Activated CD4-positive, alpha-beta memory T cell treated with anti-CD3 and anti-CD28 coated beads for 36 hours (primary cell): ENCODE measurements at regions of chr1 and their contacts with region 1.

Region 1: GRCh38 chr1:84753516-84754385 is 63.5 kb upstream of the SSX2IP start:
- DNase-seq: peak; percentile 86
- H3K4me3 Mint-ChIP-seq: no peak overlapping the region
- H3K27ac Mint-ChIP-seq: no peak overlapping the region
- H3K4me1 Mint-ChIP-seq: peaks cover 14% of the 10 kb centered on the region
- H3K27me3 Mint-ChIP-seq: peaks cover 27% of the 10 kb centered on the region

Region 2: DNA sequence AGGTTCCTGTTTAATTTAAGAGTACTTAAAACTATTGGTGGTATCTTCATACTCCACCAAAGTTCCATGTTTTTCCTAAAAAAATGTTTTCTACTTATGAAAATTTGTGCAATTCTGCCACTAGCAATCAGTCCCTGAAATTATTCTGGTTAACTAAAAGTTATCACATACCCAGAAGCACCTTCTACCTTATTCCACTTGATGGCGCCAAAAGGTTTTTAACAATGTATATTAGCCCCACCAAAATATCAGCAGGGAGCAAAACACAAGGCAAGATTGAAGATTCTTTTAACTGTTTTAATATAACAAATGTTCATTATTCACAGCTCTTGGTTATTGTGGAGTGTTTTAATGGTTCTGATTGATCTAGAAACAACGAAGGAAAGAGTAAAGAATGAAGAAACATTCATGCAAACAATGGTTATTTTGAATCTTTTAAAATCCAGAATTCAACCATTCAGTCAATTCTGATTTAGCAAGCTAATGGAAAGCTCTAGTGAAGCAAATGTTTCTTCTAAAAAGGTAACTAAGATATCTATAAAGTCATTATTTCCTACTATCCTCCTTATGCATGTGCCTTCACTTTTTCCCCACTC is 822.0 kb before region 1 on chr1:
- CTCF ChIA-PET with region 1: interaction called, 5 read pairs
- POLR2A ChIA-PET with region 1: no interaction called
- intact Hi-C with region 1: loop called (anchors 5 kb)
- DNase-seq: no peak
- H3K4me3 Mint-ChIP-seq: no peak overlapping the region
- H3K27ac Mint-ChIP-seq: no peak overlapping the region
- H3K4me1 Mint-ChIP-seq: no peaks in the 10 kb centered on the region
- H3K27me3 Mint-ChIP-seq: peaks cover 6% of the 10 kb centered on the region

Region 3: GRCh38 chr1:84442256-84442655 is 311.5 kb before region 1 on chr1:
- CTCF ChIA-PET with region 1: interaction called, 35 read pairs
- POLR2A ChIA-PET with region 1: no interaction called
- intact Hi-C with region 1: loop called (anchors 1 kb)
- DNase-seq: no peak
- H3K4me3 Mint-ChIP-seq: peak overlapping the region; percentile 0
- H3K27ac Mint-ChIP-seq: no peak overlapping the region
- H3K4me1 Mint-ChIP-seq: peaks cover 19% of the 10 kb centered on the region
- H3K27me3 Mint-ChIP-seq: peaks cover 2% of the 10 kb centered on the region

Region 4: GRCh38 chr1:84690397-84691121 is 63.2 kb before region 1 on chr1 and contains the start of gene SSX2IP:
- CTCF ChIA-PET with region 1: interaction called, 4 read pairs
- POLR2A ChIA-PET with region 1: no interaction called
- intact Hi-C with region 1: loop called (anchors 2 kb)
- DNase-seq: peak; percentile 99
- H3K4me3 Mint-ChIP-seq: peak within 1 kb of the TSS; percentile 94
- H3K27ac Mint-ChIP-seq: peak within 1 kb of the TSS; percentile 80
- H3K4me1 Mint-ChIP-seq: peaks cover 53% of the 10 kb centered on the region
- H3K27me3 Mint-ChIP-seq: peaks cover 2% of the 10 kb centered on the region
- total RNA-seq, gene SSX2IP: 10.9 to 11.6 TPM

Region 5: GRCh38 chr1:84742653-84743052 is 11.1 kb before region 1 on chr1:
- CTCF ChIA-PET with region 1: interaction called, 14 read pairs
- POLR2A ChIA-PET with region 1: no interaction called
- intact Hi-C with region 1: no loop called
- DNase-seq: peak; percentile 46
- H3K4me3 Mint-ChIP-seq: no peak overlapping the region
- H3K27ac Mint-ChIP-seq: no peak overlapping the region
- H3K4me1 Mint-ChIP-seq: peaks cover 17% of the 10 kb centered on the region
- H3K27me3 Mint-ChIP-seq: peaks cover 3% of the 10 kb centered on the region

Region 6: GRCh38 chr1:84772428-84772943 is 18.7 kb after region 1 on chr1:
- CTCF ChIA-PET with region 1: interaction called, 26 read pairs
- POLR2A ChIA-PET with region 1: no interaction called
- intact Hi-C with region 1: no loop called
- DNase-seq: peak; percentile 83
- H3K4me3 Mint-ChIP-seq: no peak overlapping the region
- H3K27ac Mint-ChIP-seq: no peak overlapping the region
- H3K4me1 Mint-ChIP-seq: no peaks in the 10 kb centered on the region
- H3K27me3 Mint-ChIP-seq: no peaks in the 10 kb centered on the region